Right cardiac atrium (tissue), 5 donors: ENCODE measurements at regions of chr2 and their contacts with region 1.

Region 1: GRCh38 chr2:237413777-237414661 is at the start of gene COL6A3:
- DNase-seq: peak; percentile 85 to 92 (median 88)
- ATAC-seq: peak; percentile 79 to 85
- H3K4me3 ChIP-seq: peak within 1 kb of the TSS; percentile 56
- H3K27ac ChIP-seq: peak within 1 kb of the TSS; percentile 90
- H3K4me1 ChIP-seq: no peaks in the 10 kb centered on the region
- H3K27me3 ChIP-seq: no peaks in the 10 kb centered on the region
- total RNA-seq, gene COL6A3: 54.4 to 191 (median 139) TPM

Region 2: DNA sequence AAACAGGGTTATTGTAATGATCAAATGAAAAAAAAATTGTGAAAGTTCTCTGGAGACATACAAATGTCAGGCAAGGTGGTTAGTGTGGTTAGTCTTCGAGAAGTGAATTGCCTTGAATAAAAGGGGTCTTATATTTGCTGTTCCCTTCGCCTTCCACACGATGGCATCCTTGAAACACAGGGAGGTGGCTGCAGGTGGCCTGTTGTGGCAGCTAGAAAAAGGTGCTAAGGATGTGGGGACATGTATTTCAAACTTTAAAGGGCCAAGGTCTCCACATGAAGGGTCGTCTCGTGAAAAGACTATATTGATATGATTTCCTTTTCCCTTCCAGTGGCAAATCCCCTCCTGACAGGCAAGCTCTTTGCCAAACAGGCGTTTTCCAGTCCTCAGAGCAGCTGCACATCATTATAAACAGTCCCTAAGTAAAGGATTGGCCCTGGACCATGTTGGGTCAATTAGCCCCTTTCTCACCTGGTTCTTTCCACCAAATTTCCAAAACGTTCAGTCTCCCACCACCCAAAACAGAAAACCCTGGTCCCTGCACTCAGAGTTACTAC is 259.9 kb before region 1 on chr2:
- intact Hi-C with region 1: loop called in 3 of 4 experiments (anchors 2 to 10 kb)
- DNase-seq: peak in 1 of 3 donors; percentile 65
- ATAC-seq: no peak
- H3K4me3 ChIP-seq: no peak overlapping the region
- H3K27ac ChIP-seq: no peak overlapping the region
- H3K4me1 ChIP-seq: no peaks in the 10 kb centered on the region
- H3K27me3 ChIP-seq: no peaks in the 10 kb centered on the region

Region 3: GRCh38 chr2:237171396-237171795 is 242.6 kb before region 1 on chr2:
- intact Hi-C with region 1: loop called in 1 of 4 experiments (anchors 5 kb)
- DNase-seq: no peak
- ATAC-seq: peak; percentile 86 to 92
- H3K4me3 ChIP-seq: no peak overlapping the region
- H3K27ac ChIP-seq: peak overlapping the region; percentile 83
- H3K4me1 ChIP-seq: no peaks in the 10 kb centered on the region
- H3K27me3 ChIP-seq: no peaks in the 10 kb centered on the region

Region 4: GRCh38 chr2:237581751-237582746 is 168.0 kb after region 1 on chr2:
- intact Hi-C with region 1: no loop called
- DNase-seq: peak; percentile 76 to 92 (median 91)
- ATAC-seq: peak; percentile 90 to 92
- H3K4me3 ChIP-seq: no peak overlapping the region
- H3K27ac ChIP-seq: peak overlapping the region; percentile 54
- H3K4me1 ChIP-seq: no peaks in the 10 kb centered on the region
- H3K27me3 ChIP-seq: no peaks in the 10 kb centered on the region